Testis (tissue), 5 donors: ENCODE measurements at regions of chr12 and their contacts with region 1.

Region 1: GRCh38 chr12:15155271-15155670 is 65.9 kb downstream of the RERG start:
- DNase-seq: no peak
- H3K4me3 ChIP-seq: no peak overlapping the region
- H3K27ac ChIP-seq: peak overlapping the region in 1 of 2 donors; percentile 19
- H3K4me1 ChIP-seq: peaks cover 11% of the 10 kb centered on the region
- H3K27me3 ChIP-seq: no peaks in the 10 kb centered on the region
- CTCF ChIP-seq: no peak
- POLR2A ChIP-seq: no peak

Region 2: GRCh38 chr12:15208125-15208524 is 52.9 kb after region 1 on chr12:
- intact Hi-C with region 1: no loop called
- DNase-seq: no peak
- H3K4me3 ChIP-seq: no peak overlapping the region
- H3K27ac ChIP-seq: peak overlapping the region in 1 of 2 donors; percentile 79
- H3K4me1 ChIP-seq: no peaks in the 10 kb centered on the region
- H3K27me3 ChIP-seq: no peaks in the 10 kb centered on the region
- CTCF ChIP-seq: peak in 1 of 3 experiments; percentile 24
- POLR2A ChIP-seq: no peak

Region 3: DNA sequence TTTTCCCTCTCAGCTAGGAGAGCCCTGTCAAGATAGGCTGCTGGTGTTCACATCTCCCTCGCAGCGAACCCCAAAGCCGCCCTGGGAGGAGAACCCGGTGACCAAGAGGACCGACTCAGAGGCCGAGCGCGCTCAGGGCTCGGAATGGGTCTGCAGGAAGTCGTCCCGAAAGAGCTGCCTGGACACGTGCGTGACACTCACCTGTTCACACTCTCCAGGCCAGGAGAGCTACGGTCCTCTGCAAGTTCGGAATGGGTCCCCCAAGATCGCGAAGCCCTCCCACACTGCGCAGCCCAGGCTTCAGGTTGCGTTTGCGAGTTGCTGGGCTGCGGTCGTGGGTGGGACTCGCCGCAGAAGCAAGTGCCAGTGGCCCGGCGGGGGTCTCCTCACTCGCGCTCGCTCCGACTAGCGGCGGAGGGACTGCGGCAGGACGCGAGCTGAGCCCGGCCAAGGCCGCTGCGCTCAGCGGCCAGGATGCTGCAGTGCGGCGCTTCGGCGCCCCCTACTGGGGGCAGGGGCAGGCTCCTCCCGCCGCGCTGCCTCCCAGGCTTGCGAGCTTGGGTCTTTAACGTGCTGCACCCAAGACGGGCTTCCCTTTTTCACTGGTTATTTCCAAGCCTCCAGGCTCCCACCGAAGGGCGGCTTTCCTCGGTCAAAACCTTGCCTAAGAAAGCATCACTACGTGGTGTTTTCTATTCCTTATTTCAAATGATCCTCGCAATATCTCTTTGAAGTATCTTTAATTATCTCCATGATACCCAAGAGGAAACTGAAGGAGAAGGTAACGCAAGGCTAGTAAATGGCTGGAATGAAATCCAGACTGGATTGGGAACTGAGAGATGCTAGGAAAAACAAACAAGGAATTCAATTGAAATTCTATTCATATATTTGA is 66.0 kb after region 1 on chr12 and contains the start of gene RERG:
- intact Hi-C with region 1: loop called (anchors 5 kb)
- DNase-seq: peak; percentile 84
- H3K4me3 ChIP-seq: peak within 1 kb of the TSS; percentile 56 to 74
- H3K27ac ChIP-seq: peak within 1 kb of the TSS; percentile 27 to 79
- H3K4me1 ChIP-seq: peaks cover 9% of the 10 kb centered on the region
- H3K27me3 ChIP-seq: no peaks in the 10 kb centered on the region
- CTCF ChIP-seq: peak; percentile 92 to 97 (median 95)
- POLR2A ChIP-seq: no peak
- total RNA-seq, gene RERG: 14.9 to 20.7 TPM